ENCODE measurements at regions of chr17 and their contacts with region 1.

Region 1: GRCh38 chr17:17179371-17179827 is 26.7 kb downstream of the PLD6 start:
- DNase-seq: peak in 7 of 9 donors; percentile 25 to 59 (median 45)
- ATAC-seq: peak; percentile 63
- H3K4me3 ChIP-seq: peak overlapping the region; percentile 68
- H3K4me3 Mint-ChIP-seq: peak overlapping the region; percentile 73 to 95 (median 84)
- H3K27ac ChIP-seq: peak overlapping the region; percentile 70
- H3K27ac Mint-ChIP-seq: peak overlapping the region; percentile 94 to 100 (median 99)
- H3K4me1 ChIP-seq: peaks cover 61 to 98% of the 10 kb centered on the region in 2 donors
- H3K4me1 Mint-ChIP-seq: peaks cover 46 to 94% (median 82%) of the 10 kb centered on the region in 7 donors
- H3K27me3 ChIP-seq: no peaks in the 10 kb centered on the region
- H3K27me3 Mint-ChIP-seq: no peaks in the 10 kb centered on the region

Region 2: DNA sequence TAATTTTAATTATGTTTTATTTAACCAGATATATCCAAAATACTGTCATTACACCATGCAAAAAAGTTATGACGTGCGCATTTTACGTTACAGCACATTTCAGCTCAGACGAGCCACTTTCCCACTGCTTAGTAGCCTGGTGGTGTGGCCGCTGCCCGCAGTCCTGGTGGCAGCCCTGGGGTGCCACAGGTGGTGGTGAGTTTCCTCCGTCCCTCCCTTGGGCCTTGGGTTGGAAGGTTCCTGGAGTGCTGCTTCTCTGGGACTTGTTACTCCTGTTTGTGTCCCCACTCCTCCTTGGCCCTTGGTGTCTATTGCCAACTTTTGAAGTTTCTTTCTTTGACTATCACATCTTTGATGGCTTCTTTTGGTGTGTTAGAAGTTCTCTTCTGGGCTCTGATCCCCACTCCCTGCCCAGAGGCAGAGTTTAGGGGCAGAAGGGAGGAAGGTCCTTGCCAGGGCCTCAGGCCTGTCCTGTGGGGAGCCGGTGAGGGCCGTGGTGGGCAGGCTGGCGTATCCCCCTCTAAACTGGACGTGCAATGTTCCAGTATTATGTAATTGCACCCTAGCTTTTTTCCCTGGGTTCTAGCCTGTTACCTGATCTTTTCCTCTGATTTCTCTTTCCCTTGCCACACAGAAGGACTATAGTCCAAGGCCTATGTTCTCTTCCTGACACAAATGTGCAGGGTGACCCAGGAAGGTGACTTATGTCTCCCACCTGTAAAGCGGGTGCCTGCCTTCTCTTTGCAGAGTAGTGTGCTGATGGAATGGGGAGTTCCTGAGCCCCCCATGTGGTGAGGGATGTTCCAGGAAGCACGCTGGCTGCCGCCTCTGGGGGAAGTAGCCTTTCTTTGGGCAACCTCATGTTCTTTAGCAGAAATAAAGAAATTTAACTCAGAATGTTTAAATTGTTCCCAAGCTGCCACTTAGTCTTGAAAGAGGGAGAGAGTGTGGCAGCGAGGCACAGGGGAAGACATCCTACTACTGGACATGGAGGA is 128.8 kb before region 1 on chr17:
- CTCF ChIA-PET with region 1: no interaction called
- POLR2A ChIA-PET with region 1: no interaction called
- intact Hi-C with region 1: no loop called
- DNase-seq: no peak
- ATAC-seq: no peak
- H3K4me3 ChIP-seq: no peak overlapping the region
- H3K4me3 Mint-ChIP-seq: peak overlapping the region in 6 of 10 donors; percentile 8 to 51 (median 30)
- H3K27ac ChIP-seq: no peak overlapping the region
- H3K27ac Mint-ChIP-seq: peak overlapping the region in 3 of 9 donors; percentile 1 to 60 (median 53)
- H3K4me1 ChIP-seq: peaks cover 14 to 42% of the 10 kb centered on the region in 2 donors
- H3K4me1 Mint-ChIP-seq: peaks cover 48 to 86% (median 75%) of the 10 kb centered on the region in 7 donors
- H3K27me3 ChIP-seq: no peaks in the 10 kb centered on the region
- H3K27me3 Mint-ChIP-seq: no peaks in the 10 kb centered on the region

Region 3: GRCh38 chr17:17141860-17142552 is 37.4 kb before region 1 on chr17:
- CTCF ChIA-PET with region 1: interaction called, 3 read pairs
- POLR2A ChIA-PET with region 1: no interaction called
- intact Hi-C with region 1: loop called (anchors 5 kb)
- DNase-seq: peak; percentile 35 to 64 (median 54)
- ATAC-seq: peak; percentile 74
- H3K4me3 ChIP-seq: no peak overlapping the region
- H3K4me3 Mint-ChIP-seq: peak overlapping the region in 2 of 10 donors; percentile 2 to 3
- H3K27ac ChIP-seq: no peak overlapping the region
- H3K27ac Mint-ChIP-seq: peak overlapping the region in 7 of 9 donors; percentile 5 to 85 (median 63)
- H3K4me1 ChIP-seq: peaks cover 0 to 2% of the 10 kb centered on the region in 2 donors
- H3K4me1 Mint-ChIP-seq: peaks cover 8 to 24% (median 9%) of the 10 kb centered on the region in 7 donors
- H3K27me3 ChIP-seq: no peaks in the 10 kb centered on the region
- H3K27me3 Mint-ChIP-seq: no peaks in the 10 kb centered on the region

Region 4: GRCh38 chr17:17151962-17152361 is 27.4 kb before region 1 on chr17:
- CTCF ChIA-PET with region 1: interaction called, 3 read pairs
- POLR2A ChIA-PET with region 1: interaction called, 4 read pairs
- intact Hi-C with region 1: loop called (anchors 1 to 5 kb)
- DNase-seq: no peak
- ATAC-seq: peak; percentile 66
- H3K4me3 ChIP-seq: no peak overlapping the region
- H3K4me3 Mint-ChIP-seq: peak overlapping the region in 3 of 10 donors; percentile 15 to 52 (median 27)
- H3K27ac ChIP-seq: no peak overlapping the region
- H3K27ac Mint-ChIP-seq: peak overlapping the region in 3 of 9 donors; percentile 28 to 78 (median 77)
- H3K4me1 ChIP-seq: peaks cover 13 to 40% of the 10 kb centered on the region in 2 donors
- H3K4me1 Mint-ChIP-seq: peaks cover 32 to 49% (median 41%) of the 10 kb centered on the region in 7 donors
- H3K27me3 ChIP-seq: no peaks in the 10 kb centered on the region
- H3K27me3 Mint-ChIP-seq: no peaks in the 10 kb centered on the region

Region 5: GRCh38 chr17:17191961-17192381 is 12.6 kb after region 1 on chr17:
- CTCF ChIA-PET with region 1: interaction called, 4 read pairs
- POLR2A ChIA-PET with region 1: interaction called, 7 read pairs
- intact Hi-C with region 1: loop called in 1 of 2 experiments (anchors 1 kb)
- DNase-seq: no peak
- ATAC-seq: no peak
- H3K4me3 ChIP-seq: no peak overlapping the region
- H3K4me3 Mint-ChIP-seq: no peak overlapping the region
- H3K27ac ChIP-seq: no peak overlapping the region
- H3K27ac Mint-ChIP-seq: peak overlapping the region in 2 of 9 donors; percentile 12 to 28
- H3K4me1 ChIP-seq: no peaks in the 10 kb centered on the region
- H3K4me1 Mint-ChIP-seq: peaks cover 5 to 22% (median 11%) of the 10 kb centered on the region in 7 donors
- H3K27me3 ChIP-seq: no peaks in the 10 kb centered on the region
- H3K27me3 Mint-ChIP-seq: no peaks in the 10 kb centered on the region

Region 6: GRCh38 chr17:17206124-17206912 is 26.9 kb after region 1 on chr17 and contains the start of gene PLD6:
- CTCF ChIA-PET with region 1: interaction called, 5 read pairs
- POLR2A ChIA-PET with region 1: interaction called, 30 read pairs
- intact Hi-C with region 1: loop called (anchors 1 to 2 kb)
- DNase-seq: peak; percentile 88 to 96 (median 93)
- ATAC-seq: peak; percentile 92
- H3K4me3 ChIP-seq: peak within 1 kb of the TSS; percentile 68
- H3K4me3 Mint-ChIP-seq: peak within 1 kb of the TSS; percentile 87 to 93 (median 89)
- H3K27ac ChIP-seq: peak within 1 kb of the TSS; percentile 70
- H3K27ac Mint-ChIP-seq: peak within 1 kb of the TSS; percentile 75 to 96 (median 91)
- H3K4me1 ChIP-seq: peaks cover 17 to 30% of the 10 kb centered on the region in 2 donors
- H3K4me1 Mint-ChIP-seq: peaks cover 12 to 32% (median 19%) of the 10 kb centered on the region in 7 donors
- H3K27me3 ChIP-seq: no peaks in the 10 kb centered on the region
- H3K27me3 Mint-ChIP-seq: no peaks in the 10 kb centered on the region
- total RNA-seq, gene PLD6: 6.2 to 13.9 (median 12.1) TPM

Region 7: DNA sequence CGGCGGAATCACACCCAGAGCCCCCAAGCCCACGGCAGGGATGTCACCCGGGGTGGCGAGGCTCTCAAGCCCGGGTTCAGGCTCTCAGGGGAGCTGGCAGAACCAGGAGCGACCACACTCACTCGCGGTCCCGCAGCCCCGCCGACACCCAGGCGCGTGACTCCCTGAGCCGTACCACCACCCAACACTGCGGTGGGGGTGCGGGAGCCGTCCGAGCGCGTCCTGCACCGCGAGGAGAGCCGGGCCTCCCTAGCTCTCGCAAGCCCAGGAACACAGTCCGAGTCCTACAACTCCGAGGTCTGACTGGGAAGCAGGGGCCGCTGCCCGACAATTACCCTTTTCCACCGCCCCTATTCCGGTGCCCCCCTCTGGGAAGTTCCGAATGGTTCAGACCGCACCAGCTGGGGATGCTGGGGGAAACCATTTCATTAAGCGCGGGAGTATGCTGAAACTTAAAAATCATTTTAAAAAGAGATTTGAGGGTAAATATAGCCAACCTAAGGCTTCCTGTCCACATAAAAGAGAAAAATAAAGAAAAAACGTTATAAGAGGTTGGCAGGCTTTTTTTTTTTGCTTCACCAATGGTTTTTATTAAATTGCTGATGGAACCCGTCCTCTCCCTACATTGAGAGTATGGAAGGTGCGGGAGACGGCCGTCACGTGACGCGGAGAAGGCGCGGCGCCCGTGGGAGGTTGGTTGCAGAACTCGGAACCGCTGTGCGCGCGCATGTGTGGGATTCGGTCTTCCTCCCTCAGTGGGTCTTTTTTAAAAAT is 57.8 kb after region 1 on chr17 and contains the start of gene FLCN:
- CTCF ChIA-PET with region 1: no interaction called
- POLR2A ChIA-PET with region 1: interaction called, 7 read pairs
- intact Hi-C with region 1: loop called (anchors 1 kb)
- DNase-seq: peak; percentile 86 to 96 (median 91)
- ATAC-seq: peak; percentile 95
- H3K4me3 ChIP-seq: peak within 1 kb of the TSS; percentile 92
- H3K4me3 Mint-ChIP-seq: peak within 1 kb of the TSS; percentile 90 to 99 (median 96)
- H3K27ac ChIP-seq: peak within 1 kb of the TSS; percentile 97
- H3K27ac Mint-ChIP-seq: peak within 1 kb of the TSS; percentile 97 to 100 (median 98)
- H3K4me1 ChIP-seq: peaks cover 13 to 18% of the 10 kb centered on the region in 2 donors
- H3K4me1 Mint-ChIP-seq: peaks cover 16 to 38% (median 31%) of the 10 kb centered on the region in 7 donors
- H3K27me3 ChIP-seq: no peaks in the 10 kb centered on the region
- H3K27me3 Mint-ChIP-seq: peaks cover 0 to 6% (median 0%) of the 10 kb centered on the region in 5 donors
- total RNA-seq, gene FLCN: 39.4 to 94.7 (median 66.9) TPM

Region 8: GRCh38 chr17:17303010-17303846 is 123.8 kb after region 1 on chr17 and contains the start of gene NT5M:
- CTCF ChIA-PET with region 1: no interaction called
- POLR2A ChIA-PET with region 1: interaction called, 4 read pairs
- intact Hi-C with region 1: loop called (anchors 1 to 2 kb)
- DNase-seq: peak; percentile 33 to 84 (median 56)
- ATAC-seq: peak; percentile 77
- H3K4me3 ChIP-seq: peak within 1 kb of the TSS; percentile 58
- H3K4me3 Mint-ChIP-seq: peak within 1 kb of the TSS; percentile 82 to 96 (median 90)
- H3K27ac ChIP-seq: peak within 1 kb of the TSS; percentile 67
- H3K27ac Mint-ChIP-seq: peak within 1 kb of the TSS; percentile 53 to 93 (median 84)
- H3K4me1 ChIP-seq: peaks cover 12 to 33% of the 10 kb centered on the region in 2 donors
- H3K4me1 Mint-ChIP-seq: peaks cover 16 to 49% (median 37%) of the 10 kb centered on the region in 7 donors
- H3K27me3 ChIP-seq: no peaks in the 10 kb centered on the region
- H3K27me3 Mint-ChIP-seq: no peaks in the 10 kb centered on the region
- total RNA-seq, gene NT5M: 2.9 to 6.3 (median 3.5) TPM

Region 9: DNA sequence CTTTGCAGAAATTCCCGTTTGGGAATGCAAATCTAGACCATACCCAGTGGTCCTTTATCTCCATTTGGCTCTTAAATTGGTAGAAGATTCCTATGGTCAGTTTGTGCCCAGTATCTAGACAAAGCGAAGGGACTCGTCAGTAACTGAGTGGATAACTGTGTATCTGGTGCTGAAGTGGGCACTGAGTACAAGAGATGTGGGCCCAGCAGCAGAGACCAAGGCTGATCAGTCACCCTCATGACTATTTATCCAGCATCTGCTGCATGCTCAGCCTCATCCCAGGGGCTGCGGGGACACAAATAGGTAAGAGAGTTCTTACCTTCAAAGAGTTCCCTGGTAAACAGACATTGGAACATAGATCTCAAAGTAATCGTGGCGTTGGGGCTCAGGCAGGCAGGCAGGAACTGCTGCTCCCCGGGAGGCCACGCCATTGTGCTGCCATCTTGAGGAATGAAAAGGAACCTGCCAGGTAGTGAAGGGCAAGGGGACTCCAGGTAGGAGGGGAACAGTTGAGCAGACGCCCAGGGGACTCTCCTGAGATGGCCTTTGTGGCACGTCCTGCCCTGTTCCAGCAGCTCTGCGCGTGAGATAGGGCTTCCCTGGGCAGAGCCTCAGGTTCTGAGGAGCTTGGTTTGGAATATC is 134.1 kb after region 1 on chr17:
- CTCF ChIA-PET with region 1: no interaction called
- POLR2A ChIA-PET with region 1: no interaction called
- intact Hi-C with region 1: no loop called
- DNase-seq: peak; percentile 49 to 80 (median 76)
- ATAC-seq: peak; percentile 96
- H3K4me3 ChIP-seq: no peak overlapping the region
- H3K4me3 Mint-ChIP-seq: no peak overlapping the region
- H3K27ac ChIP-seq: no peak overlapping the region
- H3K27ac Mint-ChIP-seq: peak overlapping the region in 2 of 9 donors; percentile 28 to 43
- H3K4me1 ChIP-seq: no peaks in the 10 kb centered on the region
- H3K4me1 Mint-ChIP-seq: peaks cover 0 to 7% (median 5%) of the 10 kb centered on the region in 7 donors
- H3K27me3 ChIP-seq: no peaks in the 10 kb centered on the region
- H3K27me3 Mint-ChIP-seq: no peaks in the 10 kb centered on the region